ENCODE measurements at regions of chrX and their contacts with region 1.

Region 1: GRCh38 chrX:16892504-16893362 is 22.6 kb upstream of the RBBP7 start:
- DNase-seq: no peak
- H3K4me3 ChIP-seq: no peak overlapping the region
- H3K27ac ChIP-seq: no peak overlapping the region
- H3K4me1 ChIP-seq: no peaks in the 10 kb centered on the region
- H3K27me3 ChIP-seq: peaks cover 0 to 5% (median 0%) of the 10 kb centered on the region in 4 donors
- CTCF ChIP-seq: peak; percentile 72 to 78 (median 75)
- EP300 ChIP-seq: no peak
- POLR2A ChIP-seq: no peak

Region 2: DNA sequence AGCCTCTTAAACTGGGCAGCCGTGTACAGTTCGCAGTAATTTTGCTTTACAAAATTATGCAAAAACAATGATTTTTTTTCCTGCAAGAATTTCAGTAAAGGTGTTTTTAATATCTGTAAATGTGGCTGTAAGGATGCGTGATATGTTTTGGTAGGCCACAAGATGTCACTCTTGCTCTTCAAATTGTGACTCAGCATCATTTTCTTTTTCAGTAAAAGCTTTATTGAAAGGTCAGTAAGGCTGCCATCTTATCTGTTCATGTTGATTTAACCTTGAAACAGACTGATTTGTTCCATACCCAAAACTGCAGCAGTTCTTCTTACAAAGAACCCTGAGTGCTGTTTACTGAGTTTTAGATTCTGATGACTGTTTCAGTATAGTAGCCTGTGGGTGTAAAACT is 66.5 kb before region 1 on chrX:
- intact Hi-C with region 1: loop called (anchors 5 kb)
- DNase-seq: no peak
- H3K4me3 ChIP-seq: no peak overlapping the region
- H3K27ac ChIP-seq: peak overlapping the region in 3 of 4 donors; percentile 15 to 79 (median 71)
- H3K4me1 ChIP-seq: peaks cover 0 to 27% (median 17%) of the 10 kb centered on the region in 4 donors
- H3K27me3 ChIP-seq: no peaks in the 10 kb centered on the region
- CTCF ChIP-seq: peak; percentile 43 to 55 (median 52)
- EP300 ChIP-seq: no peak
- POLR2A ChIP-seq: no peak